Activated CD4-positive, alpha-beta T cell treated with anti-CD3 and anti-CD28 coated beads, Interleukin-2, amount 10 ng/mL, durations not matched to agents 24 days and 14 days (primary cell): ENCODE measurements at regions of chr15 and their contacts with region 1.

Region 1: DNA sequence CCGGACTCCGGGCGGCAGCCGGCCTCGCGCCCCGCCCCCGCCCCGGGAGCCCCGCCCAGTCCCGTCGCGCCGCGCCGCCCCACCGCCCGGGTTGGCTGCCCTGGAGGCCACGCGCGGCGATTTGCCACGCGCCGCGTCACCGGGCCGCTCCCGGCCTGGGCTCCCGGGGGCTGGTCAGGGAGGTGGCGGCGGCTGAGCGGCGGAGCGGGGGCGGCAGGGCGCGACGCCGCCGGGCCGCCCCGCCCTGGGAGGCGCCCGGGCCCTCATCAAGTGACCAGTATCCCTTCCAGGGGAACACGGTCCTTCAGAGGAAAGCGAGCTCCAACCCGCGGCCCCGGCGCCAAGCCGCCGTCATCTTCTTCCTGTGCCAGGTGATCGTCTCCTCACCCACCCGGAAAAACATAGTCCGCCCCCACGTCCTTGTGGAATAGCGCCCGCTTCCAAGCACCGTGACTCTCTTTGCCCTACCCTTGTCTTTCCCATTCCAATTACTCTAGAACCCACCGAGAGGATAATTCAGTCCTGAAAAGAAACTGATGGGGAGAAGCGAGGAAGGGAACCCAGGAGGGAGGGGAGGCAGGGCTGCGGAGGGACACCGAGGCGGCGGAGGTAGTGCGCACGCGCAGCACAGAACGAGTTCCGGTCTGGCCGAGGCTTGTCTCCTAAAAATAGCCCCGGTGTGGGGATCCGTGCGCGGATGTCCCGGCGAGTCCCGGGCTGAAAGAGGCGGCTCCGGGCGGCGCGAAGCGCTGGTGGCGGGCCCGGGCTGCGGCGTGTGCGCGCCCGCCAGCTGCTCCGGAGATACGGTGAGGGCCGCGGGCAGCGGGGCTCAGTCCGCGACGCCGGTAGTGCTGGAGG is at the start of gene MEF2A:
- DNase-seq: peak; percentile 97
- H3K4me3 Mint-ChIP-seq: peak within 1 kb of the TSS; percentile 97
- H3K27ac Mint-ChIP-seq: peak within 1 kb of the TSS; percentile 96
- H3K4me1 Mint-ChIP-seq: peaks cover 27% of the 10 kb centered on the region
- H3K27me3 Mint-ChIP-seq: peaks cover 7% of the 10 kb centered on the region
- total RNA-seq, gene MEF2A: 24.7 and 25.3 TPM in 2 replicates

Region 2: GRCh38 chr15:99250494-99251435 is 314.8 kb before region 1 on chr15:
- intact Hi-C with region 1: loop called (anchors 1 kb)
- DNase-seq: peak; percentile 99
- H3K4me3 Mint-ChIP-seq: peak overlapping the region; percentile 94
- H3K27ac Mint-ChIP-seq: peak overlapping the region; percentile 94
- H3K4me1 Mint-ChIP-seq: peaks cover 26% of the 10 kb centered on the region
- H3K27me3 Mint-ChIP-seq: no peaks in the 10 kb centered on the region

Region 3: DNA sequence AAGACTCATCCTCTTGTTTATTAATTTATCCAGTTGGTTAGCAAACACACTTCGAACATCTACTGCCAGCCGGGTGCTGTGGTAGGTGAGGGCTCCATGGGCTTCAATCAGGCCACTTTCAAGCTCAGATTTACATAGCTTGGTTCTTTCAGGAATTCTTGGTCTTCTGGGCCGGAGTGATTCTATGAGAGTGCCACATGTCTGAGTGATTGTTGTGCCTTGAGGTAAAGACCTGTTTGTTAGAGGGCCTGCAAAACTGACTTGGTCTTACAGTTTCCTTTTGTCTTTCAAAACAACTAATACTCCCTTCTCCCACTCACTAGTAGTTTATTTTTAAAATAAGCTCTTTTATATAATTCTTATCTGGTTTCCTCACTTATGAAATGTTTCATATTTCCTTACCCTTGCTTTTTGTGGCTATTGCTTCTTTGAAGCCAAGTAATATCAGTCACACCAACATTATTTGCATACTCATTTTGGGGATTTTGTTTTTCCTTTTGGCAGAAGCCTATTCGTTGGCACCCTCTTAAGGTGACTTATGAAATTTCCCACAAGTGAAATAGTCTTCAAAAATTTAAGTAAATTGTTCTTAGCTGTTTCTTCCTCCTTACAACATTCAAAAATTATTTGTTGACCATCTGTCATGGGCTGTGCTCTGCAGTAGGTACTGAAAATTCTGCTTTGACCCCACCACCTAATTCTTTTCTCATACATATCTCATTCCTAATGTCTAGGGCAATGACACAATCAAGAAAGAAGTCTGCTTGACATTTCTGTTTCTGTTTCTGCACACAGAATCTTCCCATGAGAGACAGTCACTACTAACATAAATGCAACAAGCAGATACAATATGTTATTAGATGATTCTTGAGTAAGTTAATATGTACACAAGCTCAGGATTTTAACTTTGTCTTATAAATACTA is 194.1 kb before region 1 on chr15:
- intact Hi-C with region 1: loop called (anchors 2 kb)
- DNase-seq: no peak
- H3K4me3 Mint-ChIP-seq: peak overlapping the region; percentile 52
- H3K27ac Mint-ChIP-seq: peak overlapping the region; percentile 81
- H3K4me1 Mint-ChIP-seq: peaks cover 19% of the 10 kb centered on the region
- H3K27me3 Mint-ChIP-seq: no peaks in the 10 kb centered on the region

Region 4: GRCh38 chr15:99507504-99508310 is 57.8 kb before region 1 on chr15:
- intact Hi-C with region 1: loop called (anchors 2 kb)
- DNase-seq: peak; percentile 47
- H3K4me3 Mint-ChIP-seq: no peak overlapping the region
- H3K27ac Mint-ChIP-seq: no peak overlapping the region
- H3K4me1 Mint-ChIP-seq: peaks cover 43% of the 10 kb centered on the region
- H3K27me3 Mint-ChIP-seq: no peaks in the 10 kb centered on the region

Region 5: GRCh38 chr15:99582508-99582960 is 17.0 kb after region 1 on chr15:
- intact Hi-C with region 1: no loop called
- DNase-seq: no peak
- H3K4me3 Mint-ChIP-seq: no peak overlapping the region
- H3K27ac Mint-ChIP-seq: no peak overlapping the region
- H3K4me1 Mint-ChIP-seq: peaks cover 14% of the 10 kb centered on the region
- H3K27me3 Mint-ChIP-seq: no peaks in the 10 kb centered on the region

Region 6: DNA sequence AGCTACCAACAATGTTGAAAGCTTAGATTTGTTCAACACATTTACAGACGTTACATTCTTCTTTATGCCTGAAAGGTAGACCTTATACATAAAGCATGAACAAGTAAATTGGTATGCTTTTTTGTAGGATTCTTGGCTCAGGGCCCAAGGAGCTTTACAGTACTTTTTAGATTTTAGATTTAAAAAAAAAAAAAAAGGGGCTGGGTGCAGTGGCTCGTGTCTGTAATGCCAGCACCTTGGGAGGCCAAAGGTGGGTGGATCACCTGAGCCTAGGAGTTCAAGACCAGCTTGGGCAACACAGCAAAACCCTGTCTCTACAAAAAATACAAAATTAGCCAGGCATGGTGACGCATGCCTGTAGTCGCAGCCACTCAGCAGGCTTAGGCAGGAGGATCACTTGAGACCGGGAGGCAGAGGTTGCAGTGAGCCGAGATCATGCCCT is 40.0 kb after region 1 on chr15:
- intact Hi-C with region 1: loop called (anchors 5 kb)
- DNase-seq: no peak
- H3K4me3 Mint-ChIP-seq: no peak overlapping the region
- H3K27ac Mint-ChIP-seq: peak overlapping the region; percentile 59
- H3K4me1 Mint-ChIP-seq: peaks cover 19% of the 10 kb centered on the region
- H3K27me3 Mint-ChIP-seq: no peaks in the 10 kb centered on the region